A673 (cell line): ENCODE measurements at regions of chr19 and their contacts with region 1.

Region 1: GRCh38 chr19:47697863-47698609 is 15.2 kb upstream of the EHD2 start:
- DNase-seq: peak; percentile 89
- H3K4me3 ChIP-seq: no peak overlapping the region
- H3K27ac ChIP-seq: no peak overlapping the region
- H3K4me1 ChIP-seq: peaks cover 24% of the 10 kb centered on the region
- H3K27me3 ChIP-seq: no peaks in the 10 kb centered on the region
- CTCF ChIP-seq: peak; percentile 94

Region 2: GRCh38 chr19:47348819-47349795 is 348.9 kb before region 1 on chr19 and contains the start of gene DHX34:
- CTCF ChIA-PET with region 1: no interaction called
- POLR2A ChIA-PET with region 1: no interaction called
- intact Hi-C with region 1: no loop called
- DNase-seq: peak; percentile 99
- H3K4me3 ChIP-seq: peak within 1 kb of the TSS; percentile 67
- H3K27ac ChIP-seq: peak within 1 kb of the TSS; percentile 76
- H3K4me1 ChIP-seq: peaks cover 8% of the 10 kb centered on the region
- H3K27me3 ChIP-seq: no peaks in the 10 kb centered on the region
- CTCF ChIP-seq: peak; percentile 99
- total RNA-seq, gene DHX34: 24.5 and 29.6 TPM in 2 replicates

Region 3: DNA sequence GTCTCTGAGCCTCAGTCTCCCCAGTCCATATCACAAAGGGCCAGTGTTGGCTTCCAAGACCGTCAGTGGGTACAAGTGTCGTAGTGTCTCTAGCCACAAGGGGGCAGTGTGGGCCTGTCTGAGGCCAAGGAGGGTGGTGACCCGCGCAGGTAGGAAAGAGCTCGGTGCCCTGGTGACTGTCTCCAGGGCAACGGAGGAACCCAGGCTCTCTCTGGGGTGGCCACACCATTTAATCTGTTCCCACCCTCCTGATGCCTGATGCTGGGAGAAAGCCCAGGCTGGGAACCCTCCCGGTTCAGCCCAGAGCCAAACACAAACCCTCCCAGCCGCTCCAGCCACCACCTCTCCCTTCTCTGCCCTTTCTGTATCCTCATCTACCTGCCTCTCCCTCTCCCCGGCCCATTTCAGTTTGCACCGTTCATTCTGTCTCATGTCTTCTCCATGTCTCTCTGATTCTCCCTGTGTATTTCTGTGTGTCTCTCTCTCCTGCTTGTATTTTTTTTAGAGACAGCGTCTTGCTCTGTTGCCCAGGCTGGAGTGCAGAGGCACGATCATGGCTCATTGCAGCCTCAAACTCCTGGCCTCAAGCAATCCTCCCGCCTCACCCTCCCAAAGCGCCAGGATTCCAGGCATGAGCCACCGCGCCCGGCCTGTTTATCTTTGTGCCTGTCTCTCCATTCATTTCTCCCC is 261.2 kb before region 1 on chr19:
- CTCF ChIA-PET with region 1: interaction called, 12 read pairs
- POLR2A ChIA-PET with region 1: no interaction called
- intact Hi-C with region 1: loop called (anchors 1 kb)
- DNase-seq: peak; percentile 78
- H3K4me3 ChIP-seq: no peak overlapping the region
- H3K27ac ChIP-seq: no peak overlapping the region
- H3K4me1 ChIP-seq: no peaks in the 10 kb centered on the region
- H3K27me3 ChIP-seq: no peaks in the 10 kb centered on the region
- CTCF ChIP-seq: peak; percentile 90

Region 4: GRCh38 chr19:47608074-47608918 is 89.7 kb before region 1 on chr19:
- CTCF ChIA-PET with region 1: no interaction called
- POLR2A ChIA-PET with region 1: no interaction called
- intact Hi-C with region 1: loop called (anchors 2 kb)
- DNase-seq: peak; percentile 96
- H3K4me3 ChIP-seq: peak overlapping the region; percentile 96
- H3K27ac ChIP-seq: peak overlapping the region; percentile 92
- H3K4me1 ChIP-seq: peaks cover 23% of the 10 kb centered on the region
- H3K27me3 ChIP-seq: no peaks in the 10 kb centered on the region
- CTCF ChIP-seq: no peak

Region 5: GRCh38 chr19:47719047-47719859 is 21.2 kb after region 1 on chr19:
- CTCF ChIA-PET with region 1: interaction called, 10 read pairs
- POLR2A ChIA-PET with region 1: no interaction called
- intact Hi-C with region 1: no loop called
- DNase-seq: peak; percentile 30
- H3K4me3 ChIP-seq: no peak overlapping the region
- H3K27ac ChIP-seq: peak overlapping the region; percentile 23
- H3K4me1 ChIP-seq: peaks cover 16% of the 10 kb centered on the region
- H3K27me3 ChIP-seq: no peaks in the 10 kb centered on the region
- CTCF ChIP-seq: no peak

Region 6: GRCh38 chr19:47819858-47820257 is 121.8 kb after region 1 on chr19:
- CTCF ChIA-PET with region 1: no interaction called
- POLR2A ChIA-PET with region 1: no interaction called
- intact Hi-C with region 1: no loop called
- DNase-seq: no peak
- H3K4me3 ChIP-seq: no peak overlapping the region
- H3K27ac ChIP-seq: no peak overlapping the region
- H3K4me1 ChIP-seq: no peaks in the 10 kb centered on the region
- H3K27me3 ChIP-seq: no peaks in the 10 kb centered on the region
- CTCF ChIP-seq: no peak